ENCODE measurements at regions of chr6 and their contacts with region 1.

Region 1: GRCh38 chr6:79570129-79571029 is 33.1 kb upstream of the LCA5 start:
- DNase-seq: no peak
- ATAC-seq: peak; percentile 79
- H3K4me3 ChIP-seq: no peak overlapping the region
- H3K27ac ChIP-seq: no peak overlapping the region
- H3K4me1 ChIP-seq: no peaks in the 10 kb centered on the region
- H3K27me3 ChIP-seq: no peaks in the 10 kb centered on the region
- CTCF ChIP-seq: peak; percentile 43 to 62 (median 56); a peak in 5 of 6 replicates
- EP300 ChIP-seq: no peak
- POLR2A ChIP-seq: no peak
- RAD21 ChIP-seq: peak; percentile 76

Region 2: GRCh38 chr6:79335133-79335674 is 235.2 kb before region 1 on chr6:
- CTCF ChIA-PET with region 1: no interaction called
- POLR2A ChIA-PET with region 1: no interaction called
- RAD21 ChIA-PET with region 1: no interaction called
- SMC1A ChIA-PET with region 1: no interaction called
- in situ Hi-C with region 1: no loop called
- intact Hi-C with region 1: no loop called
- DNase-seq: peak; percentile 85
- ATAC-seq: peak; percentile 94
- H3K4me3 ChIP-seq: no peak overlapping the region
- H3K27ac ChIP-seq: peak overlapping the region; percentile 38
- H3K4me1 ChIP-seq: peaks cover 6% of the 10 kb centered on the region; the same call in 1 of the 2 replicates
- H3K27me3 ChIP-seq: no peaks in the 10 kb centered on the region
- CTCF ChIP-seq: no peak
- EP300 ChIP-seq: peak; percentile 67 to 84
- POLR2A ChIP-seq: no peak
- RAD21 ChIP-seq: peak; percentile 18; the same call in 1 of the 2 replicates

Region 3: DNA sequence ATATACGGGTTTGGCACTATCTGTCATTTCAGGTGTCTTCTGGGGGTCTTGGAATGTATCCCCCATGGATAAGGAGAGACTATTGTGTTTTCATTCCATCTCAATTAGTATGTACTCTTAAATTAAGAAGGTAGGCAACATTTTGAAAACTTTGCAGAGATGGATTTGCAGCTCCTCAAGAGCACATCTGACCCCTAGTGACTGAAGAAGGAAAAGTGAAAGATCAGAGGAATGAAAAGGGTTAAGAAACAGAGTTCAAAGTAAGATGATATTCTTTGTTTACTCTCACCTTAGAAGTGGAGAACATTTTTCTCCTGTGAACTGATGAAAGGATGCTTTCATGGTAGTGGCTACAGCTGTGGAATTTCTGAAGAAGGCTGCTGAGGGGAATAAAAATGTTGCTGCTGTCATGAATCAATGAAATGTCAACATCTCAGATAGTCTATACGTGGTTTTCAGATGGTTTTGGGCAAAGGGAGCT is 102.3 kb after region 1 on chr6:
- CTCF ChIA-PET with region 1: interaction called, 12 read pairs
- POLR2A ChIA-PET with region 1: no interaction called
- RAD21 ChIA-PET with region 1: interaction called, 4 read pairs
- SMC1A ChIA-PET with region 1: interaction called, 9 read pairs
- in situ Hi-C with region 1: no loop called
- intact Hi-C with region 1: loop called (anchors 1 kb)
- DNase-seq: no peak
- ATAC-seq: peak; percentile 69
- H3K4me3 ChIP-seq: no peak overlapping the region
- H3K27ac ChIP-seq: no peak overlapping the region
- H3K4me1 ChIP-seq: no peaks in the 10 kb centered on the region
- H3K27me3 ChIP-seq: no peaks in the 10 kb centered on the region
- CTCF ChIP-seq: peak; percentile 27 to 55 (median 52); a peak in 5 of 6 replicates
- EP300 ChIP-seq: no peak
- POLR2A ChIP-seq: no peak
- RAD21 ChIP-seq: peak; percentile 77

Region 4: DNA sequence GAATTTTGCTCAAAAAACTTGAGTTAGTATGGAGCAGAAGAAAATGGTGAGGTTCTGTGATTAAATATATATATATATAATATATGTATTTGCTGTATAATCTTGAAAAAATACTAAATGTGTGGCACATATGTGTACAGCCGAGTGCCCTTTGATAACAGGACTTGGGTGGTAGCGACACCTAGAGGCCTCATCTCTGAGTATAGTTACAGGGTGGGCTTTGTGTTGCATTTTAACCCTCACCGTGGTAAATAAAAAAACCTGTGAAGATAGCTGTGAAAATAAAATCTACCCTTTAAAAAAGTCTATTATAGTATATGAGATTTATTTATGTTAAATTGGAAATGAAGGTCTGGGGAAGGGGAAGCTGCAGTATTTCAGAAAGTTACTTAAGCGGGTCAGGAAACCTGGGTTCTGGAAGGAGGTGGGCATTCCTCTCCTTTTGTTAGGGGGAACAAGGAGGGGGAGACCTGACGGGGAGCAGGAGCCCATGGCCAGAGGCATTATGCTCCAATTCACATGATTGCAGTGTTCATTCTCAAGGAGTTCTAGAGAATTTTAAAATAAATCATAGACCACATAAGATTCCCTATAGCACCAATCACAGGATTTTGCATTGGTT is 143.4 kb after region 1 on chr6:
- CTCF ChIA-PET with region 1: interaction called, 6 read pairs
- POLR2A ChIA-PET with region 1: no interaction called
- RAD21 ChIA-PET with region 1: interaction called, 3 read pairs
- SMC1A ChIA-PET with region 1: interaction called, 4 read pairs
- in situ Hi-C with region 1: no loop called
- intact Hi-C with region 1: loop called (anchors 2 kb)
- DNase-seq: no peak
- ATAC-seq: peak; percentile 86
- H3K4me3 ChIP-seq: no peak overlapping the region
- H3K27ac ChIP-seq: no peak overlapping the region
- H3K4me1 ChIP-seq: no peaks in the 10 kb centered on the region
- H3K27me3 ChIP-seq: no peaks in the 10 kb centered on the region
- CTCF ChIP-seq: peak; percentile 50 to 62 (median 54)
- EP300 ChIP-seq: no peak
- POLR2A ChIP-seq: no peak
- RAD21 ChIP-seq: peak; percentile 78

Region 5: GRCh38 chr6:79737172-79737571 is 166.8 kb after region 1 on chr6:
- CTCF ChIA-PET with region 1: no interaction called
- POLR2A ChIA-PET with region 1: no interaction called
- RAD21 ChIA-PET with region 1: no interaction called
- SMC1A ChIA-PET with region 1: no interaction called
- in situ Hi-C with region 1: no loop called
- intact Hi-C with region 1: no loop called
- DNase-seq: no peak
- ATAC-seq: no peak
- H3K4me3 ChIP-seq: no peak overlapping the region
- H3K27ac ChIP-seq: no peak overlapping the region
- H3K4me1 ChIP-seq: no peaks in the 10 kb centered on the region
- H3K27me3 ChIP-seq: no peaks in the 10 kb centered on the region
- CTCF ChIP-seq: no peak
- EP300 ChIP-seq: no peak
- POLR2A ChIP-seq: no peak
- RAD21 ChIP-seq: no peak

Region 6: GRCh38 chr6:79813854-79814709 is 243.7 kb after region 1 on chr6:
- CTCF ChIA-PET with region 1: interaction called, 5 read pairs
- POLR2A ChIA-PET with region 1: no interaction called
- RAD21 ChIA-PET with region 1: interaction called, 3 read pairs
- SMC1A ChIA-PET with region 1: interaction called, 3 read pairs
- in situ Hi-C with region 1: no loop called
- intact Hi-C with region 1: loop called (anchors 2 kb)
- DNase-seq: peak; percentile 16
- ATAC-seq: peak; percentile 96
- H3K4me3 ChIP-seq: no peak overlapping the region
- H3K27ac ChIP-seq: no peak overlapping the region
- H3K4me1 ChIP-seq: no peaks in the 10 kb centered on the region
- H3K27me3 ChIP-seq: no peaks in the 10 kb centered on the region
- CTCF ChIP-seq: peak; percentile 82 to 84 (median 83)
- EP300 ChIP-seq: no peak
- POLR2A ChIP-seq: no peak
- RAD21 ChIP-seq: peak; percentile 75

Measured in GM12878 (cell line).